ENCODE measurements at regions of chr10 and their contacts with region 1.

Region 1: DNA sequence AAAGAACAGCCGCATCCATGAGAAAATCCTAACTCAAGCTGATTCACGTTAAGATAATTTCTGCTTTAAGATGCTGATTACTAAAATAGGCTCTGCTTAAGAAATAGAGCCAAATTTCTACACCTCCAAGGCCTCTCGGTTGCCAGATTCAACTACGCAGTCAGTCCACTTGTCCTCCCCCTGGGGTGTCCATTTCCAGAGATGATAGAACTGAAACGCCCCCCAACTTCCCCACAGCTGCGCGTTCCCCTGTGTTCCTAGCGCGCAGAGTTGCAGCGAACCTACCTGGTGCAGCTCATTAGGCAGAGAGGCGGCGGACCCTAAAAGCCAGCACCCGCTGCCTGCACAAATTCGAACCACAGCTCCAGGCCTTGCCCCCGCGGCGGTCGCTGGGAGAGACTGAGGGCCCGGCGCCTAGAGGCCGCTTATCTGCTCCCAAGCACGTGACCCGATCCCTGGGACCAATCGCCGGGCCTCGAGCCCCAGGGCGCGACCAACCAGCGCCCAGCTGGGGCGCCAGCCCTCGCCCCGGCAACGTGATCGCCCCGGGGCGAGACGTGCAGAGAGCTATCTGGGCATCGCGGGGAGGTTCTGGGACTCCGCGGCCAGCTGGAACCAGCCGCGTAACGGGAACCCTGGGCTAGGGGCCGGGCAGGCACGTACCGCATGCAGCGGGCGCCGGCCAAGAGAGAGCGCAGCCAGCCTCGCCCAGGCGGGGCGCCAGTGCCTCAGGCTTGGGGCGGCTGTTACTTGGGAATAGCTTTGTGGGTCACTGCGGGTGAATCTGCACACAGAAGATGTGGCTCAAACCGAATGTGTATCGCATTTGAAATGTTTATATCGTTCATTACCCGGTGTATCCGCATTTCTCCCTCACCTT is at the start of gene PPP1R3C:
- DNase-seq: peak; percentile 94
- ATAC-seq: peak; percentile 97
- total RNA-seq, gene PPP1R3C: 137 TPM

Region 2: GRCh38 chr10:91298224-91298871 is 334.6 kb before region 1 on chr10:
- intact Hi-C with region 1: loop called (anchors 5 kb)
- DNase-seq: peak; percentile 80
- ATAC-seq: peak; percentile 75

Region 3: DNA sequence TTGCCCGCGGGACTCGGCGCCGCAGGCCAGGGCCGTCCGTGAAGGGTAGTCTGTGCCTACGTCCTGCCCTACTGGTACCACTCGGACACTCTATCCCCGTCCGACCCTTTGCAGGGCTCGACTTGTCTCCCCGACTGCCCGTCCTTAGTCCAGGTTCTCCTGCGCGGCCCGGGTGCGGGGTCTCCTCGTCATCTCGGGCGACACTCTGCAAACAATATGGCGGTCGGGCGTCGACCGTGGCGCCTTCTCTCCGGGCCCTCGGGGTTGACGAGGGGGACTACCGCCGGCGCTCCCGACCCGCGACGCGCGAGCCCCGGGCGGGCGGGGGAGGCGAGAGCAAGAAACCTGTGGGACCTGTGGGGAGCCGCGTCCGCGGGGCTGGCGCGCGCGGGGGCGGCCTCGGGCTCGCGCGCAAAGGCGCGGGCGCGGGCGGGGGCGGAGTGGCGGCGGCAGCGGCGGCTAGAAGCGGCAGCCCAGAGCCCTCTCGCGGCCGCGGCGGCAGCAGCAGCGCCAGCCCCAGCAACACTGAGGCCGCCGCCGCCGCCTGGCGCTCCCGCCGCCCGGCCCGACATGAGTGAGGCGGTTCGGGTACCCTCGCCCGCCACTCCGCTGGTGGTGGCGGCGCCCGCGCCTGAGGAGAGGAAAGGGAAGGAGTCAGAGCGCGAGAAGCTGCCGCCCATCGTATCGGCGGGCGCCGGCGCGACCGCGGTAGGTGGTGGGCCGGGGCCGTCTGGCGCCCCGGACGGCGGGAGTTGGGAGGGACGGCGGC is 222.9 kb before region 1 on chr10 and contains the start of gene HECTD2:
- intact Hi-C with region 1: loop called (anchors 10 kb)
- DNase-seq: peak; percentile 86
- ATAC-seq: peak; percentile 82
- total RNA-seq, gene HECTD2: 2.5 TPM

Region 4: DNA sequence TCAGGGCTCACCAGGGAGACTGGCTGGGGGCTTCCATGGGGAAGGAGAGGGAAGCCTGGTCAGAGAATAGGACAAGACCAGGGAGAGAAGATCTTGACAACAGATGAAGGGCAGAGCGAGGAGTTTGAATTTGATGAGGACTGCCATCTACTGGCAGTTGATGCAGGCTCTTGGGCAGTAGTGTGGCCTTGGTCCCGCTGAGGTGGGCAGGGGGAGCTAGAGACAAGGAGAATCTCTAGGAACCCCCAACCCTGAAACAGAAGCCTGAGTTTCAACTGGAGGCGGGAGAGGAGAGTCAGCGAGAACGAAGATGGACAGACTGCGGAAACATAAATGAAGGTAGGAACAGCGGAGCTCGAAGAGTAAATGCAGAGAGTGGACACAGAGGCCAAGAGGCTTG is 81.1 kb before region 1 on chr10:
- intact Hi-C with region 1: loop called (anchors 1 kb)
- DNase-seq: peak; percentile 64
- ATAC-seq: peak; percentile 82

Region 5: DNA sequence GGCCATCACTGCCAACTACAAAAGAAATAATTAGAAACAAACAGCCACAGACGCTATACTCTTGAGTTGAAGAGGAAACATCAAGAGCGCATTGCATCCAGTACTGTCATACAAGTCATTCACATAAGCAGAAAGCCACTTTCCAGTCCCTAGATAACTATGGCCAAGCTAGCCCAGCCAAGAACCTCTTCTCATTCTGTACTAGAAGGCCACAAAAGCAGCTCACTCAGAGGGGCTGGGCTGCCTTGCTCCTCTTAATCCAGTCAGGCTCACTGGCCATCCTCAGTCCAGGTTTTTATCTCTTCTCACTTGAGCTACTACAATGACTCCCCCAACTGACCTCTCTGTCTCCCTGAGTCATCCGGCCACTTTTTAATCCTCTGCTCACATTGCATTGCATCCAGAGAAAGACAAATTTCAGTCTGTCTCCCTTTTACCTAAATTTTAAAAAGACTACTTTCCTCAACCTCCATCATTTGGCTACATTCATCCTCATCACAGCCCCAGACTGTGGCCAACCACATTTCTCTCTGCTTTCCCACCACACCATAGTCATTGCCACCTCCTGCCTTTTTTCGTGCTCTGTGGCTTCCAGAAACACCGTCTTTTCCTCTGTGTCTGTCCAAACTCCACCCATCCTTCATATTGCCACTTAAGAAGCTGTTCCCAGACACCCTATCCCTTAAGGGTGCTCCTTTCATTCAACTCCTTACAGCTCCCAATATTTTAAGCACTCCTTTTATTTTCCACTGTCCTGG is 25.1 kb before region 1 on chr10:
- intact Hi-C with region 1: loop called (anchors 1 kb)
- DNase-seq: no peak
- ATAC-seq: peak; percentile 76

Region 6: GRCh38 chr10:91908337-91909116 is 275.6 kb after region 1 on chr10:
- intact Hi-C with region 1: no loop called
- DNase-seq: peak; percentile 90
- ATAC-seq: peak; percentile 95